H1 (cell line): ENCODE measurements at regions of chr2 and their contacts with region 1.

Region 1: GRCh38 chr2:208373460-208374089 is 33.0 kb upstream of the PTH2R start:
- DNase-seq: no peak
- H3K4me3 ChIP-seq: no peak overlapping the region
- H3K27ac ChIP-seq: no peak overlapping the region
- H3K4me1 ChIP-seq: peaks cover 0 to 14% (median 3%) of the 10 kb centered on the region in 4 experiments; a peak in 4 of 7 replicates
- H3K27me3 ChIP-seq: no peaks in the 10 kb centered on the region
- CTCF ChIP-seq: peak in 2 of 3 experiments; percentile 58 to 74; a peak in 3 of 4 replicates
- EP300 ChIP-seq: no peak
- POLR2A ChIP-seq: no peak
- RAD21 ChIP-seq: peak; percentile 61 to 73

Region 2: GRCh38 chr2:208386541-208386940 is 13.0 kb after region 1 on chr2:
- CTCF ChIA-PET with region 1: interaction called, 10 read pairs
- POLR2A ChIA-PET with region 1: no interaction called
- DNase-seq: no peak
- H3K4me3 ChIP-seq: no peak overlapping the region
- H3K27ac ChIP-seq: no peak overlapping the region
- H3K4me1 ChIP-seq: no peaks in the 10 kb centered on the region
- H3K27me3 ChIP-seq: no peaks in the 10 kb centered on the region
- CTCF ChIP-seq: no peak
- EP300 ChIP-seq: no peak
- POLR2A ChIP-seq: no peak
- RAD21 ChIP-seq: no peak